ENCODE measurements at regions of chr20 and their contacts with region 1.

Region 1: GRCh38 chr20:62156592-62157386 is 13.2 kb downstream of the SS18L1 start:
- DNase-seq: peak; percentile 87
- ATAC-seq: peak; percentile 75

Region 2: GRCh38 chr20:61886721-61887594 is 269.8 kb before region 1 on chr20:
- intact Hi-C with region 1: no loop called
- DNase-seq: peak; percentile 44
- ATAC-seq: no peak

Region 3: DNA sequence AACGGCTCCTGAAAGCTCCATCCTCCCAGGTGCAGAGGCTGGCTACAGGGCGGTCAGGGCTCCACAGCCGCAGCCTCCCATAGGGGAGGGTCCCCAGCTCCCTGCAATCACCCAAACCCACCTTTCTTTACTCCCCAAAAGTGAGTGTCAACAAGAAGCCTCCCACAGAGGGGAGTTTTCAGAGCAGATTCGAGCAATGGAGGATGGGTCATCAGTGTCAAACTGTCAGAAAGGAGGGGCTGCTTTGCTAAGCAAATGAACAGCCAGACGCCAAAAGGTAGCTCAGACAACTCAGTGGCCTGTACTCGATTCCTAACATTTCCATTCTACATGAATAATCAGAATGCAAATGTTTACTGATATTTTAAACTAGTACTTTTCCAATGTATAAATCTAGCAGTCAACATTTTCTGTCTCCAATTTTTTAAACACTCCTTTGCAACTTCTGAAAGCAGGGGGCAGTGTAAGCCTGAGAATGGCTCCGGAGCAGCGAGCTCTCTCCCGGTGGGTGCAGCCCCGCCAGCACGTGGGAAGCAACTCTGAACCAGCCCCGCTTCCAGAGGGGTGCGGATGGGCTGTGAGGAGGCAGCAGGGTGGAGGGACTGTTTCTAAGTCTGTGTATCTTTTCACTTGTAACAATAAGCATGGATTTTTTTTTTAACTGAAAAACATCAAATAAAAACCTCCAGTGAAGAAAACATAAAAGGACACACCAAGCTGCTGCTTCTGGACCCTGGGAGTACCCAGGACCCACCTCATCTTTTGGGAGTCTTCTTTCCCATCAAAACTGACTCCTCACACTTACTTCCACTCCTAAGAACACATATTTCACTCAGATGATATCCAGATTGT is 146.0 kb before region 1 on chr20:
- intact Hi-C with region 1: loop called (anchors 2 kb)
- DNase-seq: no peak
- ATAC-seq: peak; percentile 72

Region 4: GRCh38 chr20:62171245-62171644 is 14.5 kb after region 1 on chr20:
- intact Hi-C with region 1: no loop called
- DNase-seq: no peak
- ATAC-seq: no peak

Region 5: DNA sequence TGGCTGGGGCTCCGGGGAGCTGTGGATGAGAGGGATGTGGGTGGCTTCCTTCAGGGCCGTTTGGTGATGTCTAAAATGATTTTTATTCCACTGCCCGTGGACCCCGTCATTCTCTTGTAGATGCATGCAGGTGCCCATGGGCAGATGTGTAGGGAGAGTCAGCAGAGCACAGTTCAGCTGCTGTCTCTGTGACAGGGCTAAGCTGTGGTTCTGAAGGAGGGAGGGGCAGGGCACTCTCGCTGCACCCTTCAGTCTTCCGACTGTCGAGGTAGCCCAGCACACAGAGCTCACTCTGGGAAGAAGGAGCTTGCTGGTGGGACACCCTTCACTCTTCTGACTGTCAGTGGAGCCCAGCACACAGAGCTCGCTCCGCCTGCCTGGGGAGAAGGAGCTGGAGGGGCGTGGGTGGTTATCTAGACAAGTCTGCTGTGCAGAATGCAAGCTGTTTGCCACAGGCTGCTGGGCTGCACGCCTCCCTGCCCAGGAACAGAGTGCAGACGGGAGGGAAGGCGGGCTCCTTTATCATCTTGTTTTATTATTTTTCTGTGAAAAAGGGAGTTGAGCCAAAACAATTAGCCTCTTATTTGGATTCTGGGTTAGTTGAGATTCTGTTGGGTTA is 117.7 kb after region 1 on chr20:
- intact Hi-C with region 1: no loop called
- DNase-seq: no peak
- ATAC-seq: no peak

Region 6: GRCh38 chr20:62516345-62516744 is 359.6 kb after region 1 on chr20:
- intact Hi-C with region 1: no loop called
- DNase-seq: peak; percentile 62
- ATAC-seq: peak; percentile 36

Measured in Right ventricle myocardium inferior (tissue), 1 donor.